ENCODE measurements at regions of chr7 and their contacts with region 1.

Region 1: DNA sequence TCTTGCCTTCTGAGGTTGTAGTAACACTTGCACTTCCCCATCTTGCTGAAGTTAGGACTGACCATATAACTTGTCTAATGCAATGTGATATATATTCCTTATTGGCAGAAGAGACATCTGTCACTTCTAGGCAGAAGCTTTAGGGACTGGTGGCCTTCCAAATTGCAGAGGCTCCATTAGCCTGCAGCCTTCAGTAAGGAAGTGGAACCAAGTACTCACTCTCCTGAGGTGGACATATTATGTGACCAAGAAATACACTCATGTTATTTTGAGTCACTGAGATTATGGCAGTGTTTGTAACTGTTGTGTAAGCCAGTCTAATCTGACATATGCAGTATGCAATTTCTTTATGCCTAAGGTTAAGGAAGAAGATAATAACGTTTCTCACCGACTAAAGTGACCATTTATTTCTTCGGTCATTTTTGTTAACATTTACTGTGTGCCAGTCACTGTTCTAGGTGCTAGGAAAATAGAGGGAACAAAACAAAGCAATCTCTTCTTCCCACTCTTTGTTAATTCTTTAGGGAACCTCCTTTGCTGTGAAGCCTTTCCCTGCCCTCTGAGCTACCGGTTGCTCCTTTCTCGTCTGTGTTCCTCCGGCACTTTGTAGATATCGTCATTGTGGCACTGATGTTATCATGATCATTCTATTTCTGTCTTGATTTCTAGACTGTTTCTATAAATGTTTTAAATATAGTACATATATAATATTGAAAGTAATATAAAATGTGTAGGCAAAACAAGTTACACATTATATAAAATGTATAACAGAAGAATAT is 52.9 kb upstream of the HBP1 start:
- DNase-seq: no peak
- ATAC-seq: no peak
- H3K4me3 ChIP-seq: no peak overlapping the region
- H3K4me3 Mint-ChIP-seq: no peak overlapping the region
- H3K27ac ChIP-seq: no peak overlapping the region
- H3K27ac Mint-ChIP-seq: no peak overlapping the region
- H3K4me1 ChIP-seq: no peaks in the 10 kb centered on the region
- H3K4me1 Mint-ChIP-seq: no peaks in the 10 kb centered on the region
- H3K27me3 ChIP-seq: peaks cover 0 to 4% of the 10 kb centered on the region in 2 experiments
- H3K27me3 Mint-ChIP-seq: peaks cover 0 to 5% of the 10 kb centered on the region in 2 donors

Region 2: GRCh38 chr7:106384371-106384770 is 731.6 kb before region 1 on chr7:
- CTCF ChIA-PET with region 1: no interaction called
- POLR2A ChIA-PET with region 1: interaction called in 1 of 2 experiments, 10 read pairs
- DNase-seq: no peak
- ATAC-seq: no peak
- H3K4me3 ChIP-seq: no peak overlapping the region
- H3K4me3 Mint-ChIP-seq: no peak overlapping the region
- H3K27ac ChIP-seq: no peak overlapping the region
- H3K27ac Mint-ChIP-seq: no peak overlapping the region
- H3K4me1 ChIP-seq: no peaks in the 10 kb centered on the region
- H3K4me1 Mint-ChIP-seq: no peaks in the 10 kb centered on the region
- H3K27me3 ChIP-seq: no peaks in the 10 kb centered on the region
- H3K27me3 Mint-ChIP-seq: peaks cover 0 to 7% of the 10 kb centered on the region in 2 donors

Region 3: DNA sequence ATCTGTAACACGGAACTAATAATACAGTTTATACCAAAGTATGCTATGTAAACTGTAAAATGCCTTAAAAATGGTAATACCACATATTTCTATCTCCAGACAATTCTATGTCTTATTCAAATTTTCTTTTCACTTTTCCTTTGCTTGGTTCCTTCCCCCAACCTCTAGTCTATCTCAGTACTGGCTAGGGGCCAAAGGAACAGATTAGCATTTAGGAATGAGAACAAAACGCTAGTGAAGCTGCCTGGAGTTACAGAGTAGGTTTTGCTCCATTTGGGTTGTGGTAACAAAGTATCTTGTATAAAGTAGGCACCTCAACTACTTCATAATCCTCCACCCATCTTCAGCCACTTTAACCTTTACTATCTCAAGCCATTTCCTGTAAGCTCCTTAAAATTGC is 146.9 kb after region 1 on chr7:
- CTCF ChIA-PET with region 1: no interaction called
- POLR2A ChIA-PET with region 1: no interaction called
- DNase-seq: no peak
- ATAC-seq: no peak
- H3K4me3 ChIP-seq: no peak overlapping the region
- H3K4me3 Mint-ChIP-seq: no peak overlapping the region
- H3K27ac ChIP-seq: no peak overlapping the region
- H3K27ac Mint-ChIP-seq: no peak overlapping the region
- H3K4me1 ChIP-seq: no peaks in the 10 kb centered on the region
- H3K4me1 Mint-ChIP-seq: no peaks in the 10 kb centered on the region
- H3K27me3 ChIP-seq: no peaks in the 10 kb centered on the region
- H3K27me3 Mint-ChIP-seq: no peaks in the 10 kb centered on the region

Measured in T-cell (primary cell).